Heart left ventricle (tissue), 16 donors: ENCODE measurements at regions of chr10 and their contacts with region 1.

Region 1: DNA sequence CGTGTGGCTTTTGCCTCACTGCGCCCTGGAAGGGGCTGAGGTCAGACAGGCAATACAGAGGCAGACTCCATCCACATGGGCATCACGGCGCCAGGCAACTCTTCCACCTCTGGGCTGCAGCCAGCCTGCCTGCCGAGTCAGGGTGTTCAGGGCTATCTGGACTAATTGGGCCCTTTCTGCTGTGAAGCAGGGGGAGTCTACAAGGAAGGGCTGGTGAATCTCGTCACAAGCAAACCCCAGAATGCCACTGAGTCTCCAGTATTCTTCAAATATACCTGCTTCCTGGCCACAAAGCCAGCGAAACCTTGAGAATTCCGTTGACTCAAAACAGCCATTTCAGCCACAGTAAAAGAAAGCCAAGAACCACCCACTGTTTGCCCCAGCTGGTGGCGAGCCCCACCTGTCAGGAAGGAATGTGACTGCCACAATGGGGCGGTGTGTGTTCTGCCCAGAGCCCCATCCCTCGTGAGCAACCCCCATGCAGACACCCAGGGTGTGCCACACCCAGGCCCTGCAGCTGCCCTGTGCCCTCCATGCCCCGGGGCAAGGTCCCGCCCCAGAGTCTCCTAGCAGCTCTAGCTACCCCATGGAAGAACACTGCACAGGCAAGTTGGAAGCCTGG is 117.3 kb downstream of the FAM53B start:
- DNase-seq: no peak
- ATAC-seq: no peak
- H3K4me3 ChIP-seq: no peak overlapping the region
- H3K27ac ChIP-seq: peak overlapping the region in 5 of 12 donors; percentile 38 to 74 (median 69)
- H3K4me1 ChIP-seq: peaks cover 7 to 99% (median 87%) of the 10 kb centered on the region in 12 donors
- H3K27me3 ChIP-seq: no peaks in the 10 kb centered on the region
- CTCF ChIP-seq: no peak
- POLR2A ChIP-seq: no peak

Region 2: DNA sequence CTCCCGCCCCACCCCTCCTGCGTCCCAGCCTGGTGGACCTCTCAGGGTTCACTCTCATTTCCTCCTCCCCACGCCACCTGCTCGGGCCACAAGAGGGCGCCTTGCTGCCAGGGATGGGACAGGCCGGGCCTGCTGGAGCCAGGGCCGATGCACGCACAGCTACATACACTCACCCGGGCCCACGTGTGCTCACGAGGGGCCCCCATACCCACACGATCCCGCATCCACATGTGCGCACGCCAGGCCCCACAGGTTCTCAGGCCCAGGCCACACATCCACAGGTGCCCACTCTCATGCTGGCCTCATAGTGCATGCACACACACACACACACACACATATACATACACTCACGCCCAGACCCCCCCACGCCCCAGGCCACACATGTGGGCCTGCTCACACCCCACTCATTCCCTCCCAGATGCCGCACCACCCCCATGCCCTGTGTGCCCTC is 96.6 kb before region 1 on chr10:
- intact Hi-C with region 1: loop called in 1 of 10 experiments (anchors 10 kb)
- DNase-seq: peak; percentile 84 to 94 (median 88)
- ATAC-seq: peak; percentile 68 to 87 (median 84)
- H3K4me3 ChIP-seq: no peak overlapping the region
- H3K27ac ChIP-seq: no peak overlapping the region
- H3K4me1 ChIP-seq: peaks cover 0 to 18% (median 5%) of the 10 kb centered on the region in 12 donors
- H3K27me3 ChIP-seq: no peaks in the 10 kb centered on the region
- CTCF ChIP-seq: peak; percentile 82 to 91 (median 87)
- POLR2A ChIP-seq: no peak

Region 3: GRCh38 chr10:124560377-124561105 is 66.3 kb before region 1 on chr10:
- intact Hi-C with region 1: loop called in 4 of 10 experiments (anchors 2 to 10 kb)
- DNase-seq: peak; percentile 70 to 91 (median 79)
- ATAC-seq: peak; percentile 90 to 95 (median 94)
- H3K4me3 ChIP-seq: peak overlapping the region in 1 of 12 donors; percentile 5
- H3K27ac ChIP-seq: peak overlapping the region; percentile 56 to 90 (median 85)
- H3K4me1 ChIP-seq: peaks cover 19 to 49% (median 36%) of the 10 kb centered on the region in 12 donors
- H3K27me3 ChIP-seq: no peaks in the 10 kb centered on the region
- CTCF ChIP-seq: no peak
- POLR2A ChIP-seq: no peak